ENCODE measurements at regions of chr12 and their contacts with region 1.

Region 1: DNA sequence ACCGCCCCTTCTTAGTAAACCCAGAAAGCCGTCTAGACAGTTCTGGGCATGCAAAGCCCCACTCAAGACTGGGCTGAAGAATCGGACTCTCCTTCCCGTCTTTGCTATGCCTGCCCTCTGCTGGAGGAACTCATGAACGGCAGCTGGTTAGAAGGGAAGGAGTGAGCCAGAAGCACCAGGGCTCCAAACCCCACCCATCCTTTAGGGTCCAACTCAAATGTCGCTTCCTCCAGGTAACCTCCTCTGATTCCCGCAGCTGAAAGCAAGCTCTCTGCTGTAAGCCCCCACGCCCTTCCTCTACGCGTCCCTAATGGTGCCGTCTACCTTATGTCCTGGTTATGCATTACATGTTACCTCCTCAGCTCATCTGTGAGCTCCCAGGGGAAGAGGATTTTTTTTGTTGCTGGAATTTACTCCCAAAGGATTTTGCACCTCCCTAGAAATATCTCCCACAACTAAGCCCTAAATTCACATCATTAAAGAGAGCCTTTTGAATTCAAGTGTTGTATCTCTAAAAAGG is 59.0 kb upstream of the SCN8A start:
- DNase-seq: peak; percentile 77 to 89 (median 83)
- H3K4me3 ChIP-seq: peak overlapping the region in 1 of 7 experiments; percentile 23
- H3K27ac ChIP-seq: no peak overlapping the region
- H3K4me1 ChIP-seq: peaks cover 0 to 2% (median 0%) of the 10 kb centered on the region in 4 experiments
- H3K27me3 ChIP-seq: no peaks in the 10 kb centered on the region

Region 2: DNA sequence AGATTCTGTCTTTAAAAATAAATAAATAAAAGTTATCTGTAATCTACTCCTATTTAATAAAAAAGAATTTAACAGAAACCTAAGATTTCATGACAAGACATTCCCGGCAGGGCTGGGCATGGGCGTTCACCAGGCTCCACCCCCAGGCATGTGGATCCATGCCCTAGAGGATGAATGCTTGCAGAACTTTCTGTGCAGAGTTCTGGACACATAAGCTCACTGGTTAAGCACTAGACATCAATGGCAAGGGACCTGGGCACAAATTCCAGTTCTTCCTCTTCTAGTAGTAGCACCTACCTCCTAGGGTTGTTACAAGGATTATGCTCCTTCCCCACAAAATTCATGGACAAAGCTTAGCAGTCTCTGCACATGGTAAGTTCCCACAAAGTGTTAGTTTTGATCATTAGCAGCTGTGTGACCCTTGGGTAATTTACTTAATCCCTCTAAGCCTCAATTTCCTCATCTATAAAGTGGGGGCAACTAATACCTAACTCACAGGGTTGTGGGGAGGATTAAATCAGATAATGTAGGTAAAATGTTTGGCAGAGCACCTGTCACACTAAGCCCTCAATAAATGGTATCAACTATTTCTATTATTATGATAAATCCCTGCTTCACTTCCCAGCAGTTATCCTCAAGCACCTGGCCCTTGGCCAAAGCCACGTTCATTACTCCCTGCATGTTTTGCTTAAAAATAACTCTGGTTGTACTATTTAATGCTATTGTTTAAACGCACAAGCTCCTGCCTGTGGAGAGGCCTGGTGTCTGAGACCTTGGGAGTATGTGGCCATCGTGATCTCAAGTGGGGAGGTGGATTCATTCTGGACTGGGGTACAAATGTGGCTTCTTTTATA is 150.6 kb before region 1 on chr12:
- CTCF ChIA-PET with region 1: no interaction called
- POLR2A ChIA-PET with region 1: no interaction called
- DNase-seq: no peak
- H3K4me3 ChIP-seq: no peak overlapping the region
- H3K27ac ChIP-seq: no peak overlapping the region
- H3K4me1 ChIP-seq: peaks cover 4 to 46% (median 31%) of the 10 kb centered on the region in 4 experiments
- H3K27me3 ChIP-seq: no peaks in the 10 kb centered on the region

Region 3: DNA sequence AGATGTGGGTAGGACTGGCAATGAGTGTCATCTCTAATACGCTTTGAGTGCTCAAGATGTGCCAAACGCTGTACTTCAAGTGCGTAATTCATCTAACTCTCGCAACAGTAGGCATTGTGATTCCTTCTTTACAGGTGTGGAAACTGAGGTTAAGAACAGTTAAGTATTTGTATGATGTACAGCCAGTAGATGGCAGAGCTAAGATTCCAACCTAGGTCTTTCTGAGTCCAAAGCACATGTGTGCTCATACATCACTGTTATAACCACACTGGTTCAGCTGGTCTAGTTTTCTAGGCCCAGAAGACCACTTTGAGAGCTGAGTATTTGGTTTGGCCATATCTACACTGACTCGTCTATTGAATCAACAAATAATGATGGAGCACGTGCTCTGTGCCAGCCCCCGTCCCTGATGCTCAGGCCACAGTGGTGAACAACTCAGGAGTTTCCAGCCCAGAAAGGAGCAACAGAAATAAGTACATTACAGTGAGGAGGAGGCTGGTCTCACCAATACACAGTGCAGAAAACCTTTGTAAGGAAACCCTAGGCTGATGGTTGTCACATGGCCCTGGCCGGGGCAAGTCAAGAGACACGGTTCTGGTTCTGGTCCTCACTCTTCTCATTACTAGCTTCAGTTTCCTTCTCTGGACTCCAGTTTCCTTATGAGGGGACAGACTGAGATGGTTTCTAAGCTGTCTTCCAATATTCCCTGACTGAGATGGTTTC is 10.3 kb before region 1 on chr12:
- CTCF ChIA-PET with region 1: interaction called, 16 read pairs
- POLR2A ChIA-PET with region 1: no interaction called
- DNase-seq: no peak
- H3K4me3 ChIP-seq: no peak overlapping the region
- H3K27ac ChIP-seq: no peak overlapping the region
- H3K4me1 ChIP-seq: peaks cover 0 to 4% (median 1%) of the 10 kb centered on the region in 4 experiments
- H3K27me3 ChIP-seq: no peaks in the 10 kb centered on the region

Region 4: GRCh38 chr12:51923501-51924271 is 391.6 kb after region 1 on chr12:
- CTCF ChIA-PET with region 1: no interaction called
- POLR2A ChIA-PET with region 1: no interaction called
- DNase-seq: peak; percentile 20 to 45 (median 42)
- H3K4me3 ChIP-seq: peak overlapping the region in 3 of 7 experiments; percentile 26 to 58 (median 42)
- H3K27ac ChIP-seq: no peak overlapping the region
- H3K4me1 ChIP-seq: peaks cover 10 to 29% (median 29%) of the 10 kb centered on the region in 4 experiments
- H3K27me3 ChIP-seq: no peaks in the 10 kb centered on the region

Measured in common myeloid progenitor, CD34-positive (primary cell).